ENCODE measurements at regions of chr10 and their contacts with region 1.

Region 1: DNA sequence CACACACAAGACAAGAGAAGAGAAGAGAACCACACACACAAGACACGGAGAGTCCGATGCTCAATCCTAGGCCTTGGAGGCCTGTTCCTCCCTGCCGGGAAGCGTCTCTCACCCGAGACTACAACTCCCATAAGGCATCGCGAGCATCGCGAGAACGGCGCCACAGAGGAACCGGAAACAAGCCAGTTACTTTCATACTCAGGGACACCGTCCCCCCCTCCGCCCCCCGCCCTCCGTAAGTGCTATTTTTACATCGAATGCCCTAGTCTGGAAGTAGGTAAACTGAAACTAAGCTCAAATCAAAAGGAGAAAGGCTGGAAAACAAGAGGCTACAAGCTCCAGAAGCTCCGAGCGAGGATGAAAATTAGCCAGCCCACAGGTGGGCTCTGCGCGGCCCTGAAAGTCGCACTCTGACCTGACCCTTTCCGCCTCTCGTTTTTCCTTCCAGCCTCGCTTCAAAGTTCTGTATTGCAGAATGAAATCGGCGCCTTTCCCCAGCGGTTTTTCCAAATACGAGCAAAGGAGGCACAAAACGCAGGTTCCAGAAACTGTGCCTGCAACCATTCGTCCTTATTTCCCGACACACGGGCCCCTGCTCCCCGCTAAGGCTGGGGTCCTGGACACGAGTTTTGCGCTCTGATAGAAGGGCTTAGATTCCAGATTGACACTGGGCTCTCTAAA is 11.5 kb upstream of the DNAJC12 start:
- DNase-seq: peak; percentile 86 to 96 (median 93)
- ATAC-seq: peak; percentile 99
- H3K4me3 ChIP-seq: peak overlapping the region; percentile 61 to 97
- H3K4me3 Mint-ChIP-seq: peak overlapping the region; percentile 94
- H3K27ac ChIP-seq: peak overlapping the region; percentile 64 to 96
- H3K27ac Mint-ChIP-seq: peak overlapping the region; percentile 96
- H3K4me1 ChIP-seq: peaks cover 5% of the 10 kb centered on the region
- H3K4me1 Mint-ChIP-seq: peaks cover 10% of the 10 kb centered on the region
- H3K27me3 ChIP-seq: no peaks in the 10 kb centered on the region
- H3K27me3 Mint-ChIP-seq: no peaks in the 10 kb centered on the region
- CTCF ChIP-seq: no peak

Region 2: GRCh38 chr10:67764012-67764822 is 85.3 kb before region 1 on chr10:
- CTCF ChIA-PET with region 1: no interaction called
- POLR2A ChIA-PET with region 1: interaction called, 3 read pairs
- intact Hi-C with region 1: loop called (anchors 1 to 2 kb)
- DNase-seq: peak; percentile 96 to 100 (median 97)
- ATAC-seq: peak; percentile 80
- H3K4me3 ChIP-seq: peak overlapping the region; percentile 83 to 92
- H3K4me3 Mint-ChIP-seq: peak overlapping the region; percentile 92
- H3K27ac ChIP-seq: peak overlapping the region; percentile 84 to 89
- H3K27ac Mint-ChIP-seq: peak overlapping the region; percentile 97
- H3K4me1 ChIP-seq: no peaks in the 10 kb centered on the region
- H3K4me1 Mint-ChIP-seq: peaks cover 8% of the 10 kb centered on the region
- H3K27me3 ChIP-seq: no peaks in the 10 kb centered on the region
- H3K27me3 Mint-ChIP-seq: peaks cover 2% of the 10 kb centered on the region
- CTCF ChIP-seq: no peak

Region 3: GRCh38 chr10:67884313-67884841 is 34.9 kb after region 1 on chr10 and contains the start of gene SIRT1:
- CTCF ChIA-PET with region 1: interaction called, 13 read pairs
- POLR2A ChIA-PET with region 1: interaction called, 4 read pairs
- intact Hi-C with region 1: loop called (anchors 1 to 2 kb)
- DNase-seq: peak; percentile 84 to 97 (median 94)
- ATAC-seq: peak; percentile 72
- H3K4me3 ChIP-seq: peak within 1 kb of the TSS; percentile 69 to 70
- H3K4me3 Mint-ChIP-seq: peak within 1 kb of the TSS; percentile 89
- H3K27ac ChIP-seq: peak within 1 kb of the TSS; percentile 57 to 89
- H3K27ac Mint-ChIP-seq: peak within 1 kb of the TSS; percentile 94
- H3K4me1 ChIP-seq: peaks cover 23% of the 10 kb centered on the region
- H3K4me1 Mint-ChIP-seq: peaks cover 35% of the 10 kb centered on the region
- H3K27me3 ChIP-seq: no peaks in the 10 kb centered on the region
- H3K27me3 Mint-ChIP-seq: no peaks in the 10 kb centered on the region
- CTCF ChIP-seq: no peak
- total RNA-seq, gene SIRT1: 72.6 to 74.5 TPM

Region 4: GRCh38 chr10:68151453-68151852 is 302.0 kb after region 1 on chr10:
- CTCF ChIA-PET with region 1: interaction called, 155 read pairs
- POLR2A ChIA-PET with region 1: interaction called, 4 read pairs
- intact Hi-C with region 1: no loop called
- DNase-seq: no peak
- ATAC-seq: no peak
- H3K4me3 ChIP-seq: no peak overlapping the region
- H3K4me3 Mint-ChIP-seq: no peak overlapping the region
- H3K27ac ChIP-seq: no peak overlapping the region
- H3K27ac Mint-ChIP-seq: no peak overlapping the region
- H3K4me1 ChIP-seq: no peaks in the 10 kb centered on the region
- H3K4me1 Mint-ChIP-seq: no peaks in the 10 kb centered on the region
- H3K27me3 ChIP-seq: no peaks in the 10 kb centered on the region
- H3K27me3 Mint-ChIP-seq: peaks cover 8% of the 10 kb centered on the region
- CTCF ChIP-seq: no peak

Region 5: DNA sequence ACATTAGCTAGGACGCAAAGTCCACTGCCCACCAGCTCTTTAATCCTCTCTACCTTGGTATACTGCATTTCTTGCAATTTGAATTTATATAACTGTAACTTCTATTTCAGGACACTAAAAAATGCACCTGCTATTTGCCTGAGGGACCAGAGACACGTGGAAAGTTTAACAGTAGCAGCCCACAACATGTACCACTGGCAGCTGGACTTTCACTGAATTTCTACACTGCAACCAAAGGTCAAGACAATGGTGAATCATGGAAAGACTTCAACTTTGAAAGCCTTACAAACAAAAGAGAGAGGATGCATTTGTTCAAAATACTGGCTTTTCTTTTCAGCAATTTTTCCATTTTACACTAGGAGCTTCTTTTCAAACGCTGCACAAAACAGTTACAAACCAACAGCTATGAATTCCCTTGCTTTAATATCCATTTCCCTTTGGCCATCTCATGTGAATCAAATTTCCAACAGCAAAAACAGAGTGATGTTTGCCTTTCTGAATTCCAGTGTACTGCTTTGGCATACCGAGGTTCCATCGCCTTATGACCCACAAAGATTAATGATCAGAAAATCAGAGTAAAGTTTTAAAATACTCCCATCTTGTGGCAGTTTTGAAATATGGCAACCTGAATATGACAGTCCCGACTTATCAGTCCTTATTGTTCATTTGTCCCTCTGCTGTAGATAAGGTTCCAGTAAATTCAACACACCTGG is 452.5 kb after region 1 on chr10:
- CTCF ChIA-PET with region 1: interaction called, 17 read pairs
- POLR2A ChIA-PET with region 1: no interaction called
- intact Hi-C with region 1: no loop called
- DNase-seq: peak in 2 of 9 experiments; percentile 37 to 50
- ATAC-seq: peak; percentile 36
- H3K4me3 ChIP-seq: no peak overlapping the region
- H3K4me3 Mint-ChIP-seq: no peak overlapping the region
- H3K27ac ChIP-seq: no peak overlapping the region
- H3K27ac Mint-ChIP-seq: no peak overlapping the region
- H3K4me1 ChIP-seq: no peaks in the 10 kb centered on the region
- H3K4me1 Mint-ChIP-seq: no peaks in the 10 kb centered on the region
- H3K27me3 ChIP-seq: no peaks in the 10 kb centered on the region
- H3K27me3 Mint-ChIP-seq: no peaks in the 10 kb centered on the region
- CTCF ChIP-seq: peak; percentile 56